Natural killer cell (primary cell): ENCODE measurements at regions of chr14 and their contacts with region 1.

Region 1: GRCh38 chr14:67583711-67584644 is 16.1 kb downstream of the PIGH start:
- DNase-seq: peak in 1 of 2 donors; percentile 68
- ATAC-seq: peak; percentile 67 to 77 (median 74)
- H3K4me3 ChIP-seq: no peak overlapping the region
- H3K4me3 Mint-ChIP-seq: no peak overlapping the region
- H3K27ac ChIP-seq: no peak overlapping the region
- H3K27ac Mint-ChIP-seq: no peak overlapping the region
- H3K4me1 ChIP-seq: no peaks in the 10 kb centered on the region
- H3K4me1 Mint-ChIP-seq: no peaks in the 10 kb centered on the region
- H3K27me3 ChIP-seq: no peaks in the 10 kb centered on the region
- H3K27me3 Mint-ChIP-seq: no peaks in the 10 kb centered on the region
- CTCF ChIP-seq: peak; percentile 61

Region 2: GRCh38 chr14:67541448-67542387 is 42.3 kb before region 1 on chr14:
- intact Hi-C with region 1: no loop called
- DNase-seq: peak in 1 of 2 donors; percentile 10
- ATAC-seq: peak in 1 of 3 donors; percentile 26
- H3K4me3 ChIP-seq: peak overlapping the region; percentile 4
- H3K4me3 Mint-ChIP-seq: peak overlapping the region; percentile 56
- H3K27ac ChIP-seq: no peak overlapping the region
- H3K27ac Mint-ChIP-seq: peak overlapping the region in 1 of 2 donors; percentile 47
- H3K4me1 ChIP-seq: peaks cover 8% of the 10 kb centered on the region
- H3K4me1 Mint-ChIP-seq: peaks cover 8 to 9% of the 10 kb centered on the region in 2 donors
- H3K27me3 ChIP-seq: peaks cover 12% of the 10 kb centered on the region
- H3K27me3 Mint-ChIP-seq: peaks cover 53 to 64% of the 10 kb centered on the region in 2 donors
- CTCF ChIP-seq: no peak

Region 3: DNA sequence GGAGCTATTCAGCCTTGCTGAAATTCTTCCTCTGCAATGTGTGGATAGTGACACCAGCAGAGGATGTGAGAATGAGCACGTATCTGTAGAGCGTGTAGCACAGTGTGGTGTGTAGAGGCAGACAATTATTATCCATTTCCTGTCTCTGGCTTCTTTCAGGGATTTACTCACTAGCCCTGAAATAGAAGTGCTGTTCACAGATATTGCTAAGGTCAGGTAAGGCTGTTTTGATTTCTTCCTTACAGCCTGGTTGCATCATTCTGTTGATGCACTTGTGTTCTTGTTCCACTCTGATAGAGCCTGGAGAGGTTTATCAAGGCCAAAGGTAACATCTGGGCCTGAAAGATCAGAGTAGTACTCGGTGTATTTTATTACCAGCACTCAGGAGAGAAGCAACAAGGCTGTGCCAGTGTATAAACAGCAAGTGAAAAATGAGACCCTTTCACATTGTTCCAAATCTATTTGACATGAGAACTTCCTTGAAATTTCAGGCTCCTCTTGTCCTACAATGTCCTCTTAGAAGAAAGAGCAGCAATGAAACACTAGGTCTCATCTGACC is 52.5 kb after region 1 on chr14:
- intact Hi-C with region 1: no loop called
- DNase-seq: no peak
- ATAC-seq: no peak
- H3K4me3 ChIP-seq: no peak overlapping the region
- H3K4me3 Mint-ChIP-seq: no peak overlapping the region
- H3K27ac ChIP-seq: no peak overlapping the region
- H3K27ac Mint-ChIP-seq: no peak overlapping the region
- H3K4me1 ChIP-seq: no peaks in the 10 kb centered on the region
- H3K4me1 Mint-ChIP-seq: no peaks in the 10 kb centered on the region
- H3K27me3 ChIP-seq: no peaks in the 10 kb centered on the region
- H3K27me3 Mint-ChIP-seq: peaks cover 0 to 6% of the 10 kb centered on the region in 2 donors
- CTCF ChIP-seq: no peak

Region 4: GRCh38 chr14:67666750-67667449 is 82.9 kb after region 1 on chr14:
- intact Hi-C with region 1: loop called (anchors 1 kb)
- DNase-seq: peak in 1 of 2 donors; percentile 78
- ATAC-seq: peak; percentile 59 to 67 (median 65)
- H3K4me3 ChIP-seq: no peak overlapping the region
- H3K4me3 Mint-ChIP-seq: peak overlapping the region; percentile 35
- H3K27ac ChIP-seq: peak overlapping the region; percentile 15
- H3K27ac Mint-ChIP-seq: peak overlapping the region; percentile 85 to 86
- H3K4me1 ChIP-seq: peaks cover 23% of the 10 kb centered on the region
- H3K4me1 Mint-ChIP-seq: peaks cover 68 to 80% of the 10 kb centered on the region in 2 donors
- H3K27me3 ChIP-seq: no peaks in the 10 kb centered on the region
- H3K27me3 Mint-ChIP-seq: no peaks in the 10 kb centered on the region
- CTCF ChIP-seq: peak; percentile 65